WTC11 (cell line): ENCODE measurements at regions of chr22 and their contacts with region 1.

Region 1: DNA sequence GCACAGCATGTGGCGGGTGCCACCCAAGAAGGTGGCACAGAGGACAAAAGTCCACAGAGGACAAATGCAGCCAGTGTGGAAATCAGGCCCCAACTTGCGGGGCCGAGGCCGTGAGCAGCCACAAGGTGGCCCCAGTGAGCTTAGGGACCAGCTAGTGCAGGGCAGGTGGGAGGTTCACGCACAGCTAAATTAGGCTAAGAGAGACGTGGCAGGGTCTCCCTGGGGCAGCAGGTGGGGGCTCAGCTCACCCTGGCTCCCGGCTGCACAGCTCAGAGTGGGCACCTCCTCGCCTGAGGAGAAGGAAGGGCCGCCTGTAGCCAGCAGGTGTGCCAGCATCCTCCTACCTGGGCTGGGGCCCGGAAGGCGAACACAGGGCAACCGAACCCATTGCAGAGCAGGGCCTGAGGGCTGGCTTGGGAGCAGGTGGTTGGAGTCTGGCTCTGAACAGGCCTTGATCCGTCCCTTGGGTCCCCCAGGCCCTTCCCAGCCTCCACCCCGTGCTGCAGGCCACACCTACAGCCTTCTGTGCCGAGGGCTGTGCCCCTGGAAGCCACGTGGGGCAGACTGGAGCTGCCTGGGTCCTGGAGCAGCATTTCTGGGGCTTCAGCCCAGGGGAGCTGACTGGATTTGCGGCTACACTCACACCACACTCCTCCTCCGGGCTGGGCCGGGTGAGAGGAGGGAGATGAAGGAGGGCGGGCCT is 26.1 kb upstream of the CELSR1 start:
- DNase-seq: peak; percentile 82
- ATAC-seq: peak; percentile 92
- H3K4me3 Mint-ChIP-seq: peak overlapping the region; percentile 18
- H3K27ac Mint-ChIP-seq: peak overlapping the region; percentile 79
- H3K4me1 Mint-ChIP-seq: peaks cover 6% of the 10 kb centered on the region; the same call in 1 of the 2 replicates
- H3K27me3 Mint-ChIP-seq: no peaks in the 10 kb centered on the region; the same call in 1 of the 2 replicates
- CTCF ChIP-seq: peak; percentile 61

Region 2: GRCh38 chr22:46462726-46463371 is 100.7 kb before region 1 on chr22:
- CTCF ChIA-PET with region 1: no interaction called
- POLR2A ChIA-PET with region 1: no interaction called
- DNase-seq: no peak
- ATAC-seq: no peak
- H3K4me3 Mint-ChIP-seq: no peak overlapping the region
- H3K27ac Mint-ChIP-seq: peak overlapping the region; percentile 53; the same call in 1 of the 2 replicates
- H3K4me1 Mint-ChIP-seq: no peaks in the 10 kb centered on the region
- H3K27me3 Mint-ChIP-seq: no peaks in the 10 kb centered on the region
- CTCF ChIP-seq: no peak

Region 3: GRCh38 chr22:46547883-46548244 is 15.7 kb before region 1 on chr22:
- CTCF ChIA-PET with region 1: interaction called, 27 read pairs
- POLR2A ChIA-PET with region 1: interaction called, 4 read pairs
- DNase-seq: no peak
- ATAC-seq: no peak
- H3K4me3 Mint-ChIP-seq: no peak overlapping the region
- H3K27ac Mint-ChIP-seq: no peak overlapping the region
- H3K4me1 Mint-ChIP-seq: no peaks in the 10 kb centered on the region
- H3K27me3 Mint-ChIP-seq: peaks cover 6% of the 10 kb centered on the region
- CTCF ChIP-seq: no peak

Region 4: DNA sequence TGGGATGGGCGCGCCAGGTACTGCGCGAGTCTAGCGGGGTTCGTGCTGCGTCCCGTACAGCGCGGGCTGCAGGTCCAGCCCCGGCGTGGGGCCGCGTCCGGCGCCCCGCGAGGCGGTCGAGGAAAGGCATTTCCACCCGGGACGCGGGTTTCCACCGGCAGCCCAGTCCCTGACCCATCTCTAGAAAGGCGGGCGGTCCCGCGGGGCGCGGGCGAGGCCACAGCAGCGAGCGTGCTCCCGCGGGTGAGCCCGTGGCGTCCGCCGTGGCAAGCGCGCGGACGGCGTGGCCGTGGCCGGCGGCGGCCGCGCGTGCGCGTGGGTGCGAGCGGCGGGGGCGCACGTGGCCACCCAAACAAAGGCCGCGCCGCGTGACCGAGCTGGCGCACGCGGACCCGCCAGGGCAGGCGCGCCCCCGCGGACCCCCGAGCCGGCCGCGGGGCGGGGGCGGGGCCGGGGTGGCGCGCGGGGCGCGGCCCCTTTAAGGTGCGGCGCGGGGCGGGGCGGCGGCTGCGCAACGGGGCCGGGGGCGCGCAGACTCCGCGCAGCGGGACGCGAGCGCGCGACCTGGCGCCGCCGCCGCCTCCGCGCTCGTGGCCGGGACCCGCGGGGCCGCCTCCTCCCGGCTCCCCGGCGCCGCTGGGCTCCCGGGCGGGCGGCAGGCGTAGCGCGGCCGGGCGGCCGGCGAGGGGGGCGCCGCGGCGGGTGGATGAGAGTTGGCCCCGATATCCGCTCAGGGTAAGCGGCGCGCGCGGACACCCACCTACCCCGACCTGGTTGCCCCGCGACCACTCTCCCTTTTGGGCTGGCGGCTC is 13.2 kb after region 1 on chr22:
- CTCF ChIA-PET with region 1: interaction called, 27 read pairs
- POLR2A ChIA-PET with region 1: no interaction called
- DNase-seq: peak; percentile 43
- ATAC-seq: peak; percentile 24
- H3K4me3 Mint-ChIP-seq: peak overlapping the region; percentile 76
- H3K27ac Mint-ChIP-seq: no peak overlapping the region
- H3K4me1 Mint-ChIP-seq: peaks cover 53% of the 10 kb centered on the region
- H3K27me3 Mint-ChIP-seq: peaks cover 3% of the 10 kb centered on the region; the same call in 1 of the 2 replicates
- CTCF ChIP-seq: no peak

Region 5: GRCh38 chr22:46626911-46627805 is 63.6 kb after region 1 on chr22:
- CTCF ChIA-PET with region 1: interaction called, 28 read pairs
- POLR2A ChIA-PET with region 1: no interaction called
- DNase-seq: peak; percentile 92
- ATAC-seq: peak; percentile 97
- H3K4me3 Mint-ChIP-seq: no peak overlapping the region
- H3K27ac Mint-ChIP-seq: peak overlapping the region; percentile 96
- H3K4me1 Mint-ChIP-seq: peaks cover 20% of the 10 kb centered on the region
- H3K27me3 Mint-ChIP-seq: no peaks in the 10 kb centered on the region
- CTCF ChIP-seq: no peak

Region 6: DNA sequence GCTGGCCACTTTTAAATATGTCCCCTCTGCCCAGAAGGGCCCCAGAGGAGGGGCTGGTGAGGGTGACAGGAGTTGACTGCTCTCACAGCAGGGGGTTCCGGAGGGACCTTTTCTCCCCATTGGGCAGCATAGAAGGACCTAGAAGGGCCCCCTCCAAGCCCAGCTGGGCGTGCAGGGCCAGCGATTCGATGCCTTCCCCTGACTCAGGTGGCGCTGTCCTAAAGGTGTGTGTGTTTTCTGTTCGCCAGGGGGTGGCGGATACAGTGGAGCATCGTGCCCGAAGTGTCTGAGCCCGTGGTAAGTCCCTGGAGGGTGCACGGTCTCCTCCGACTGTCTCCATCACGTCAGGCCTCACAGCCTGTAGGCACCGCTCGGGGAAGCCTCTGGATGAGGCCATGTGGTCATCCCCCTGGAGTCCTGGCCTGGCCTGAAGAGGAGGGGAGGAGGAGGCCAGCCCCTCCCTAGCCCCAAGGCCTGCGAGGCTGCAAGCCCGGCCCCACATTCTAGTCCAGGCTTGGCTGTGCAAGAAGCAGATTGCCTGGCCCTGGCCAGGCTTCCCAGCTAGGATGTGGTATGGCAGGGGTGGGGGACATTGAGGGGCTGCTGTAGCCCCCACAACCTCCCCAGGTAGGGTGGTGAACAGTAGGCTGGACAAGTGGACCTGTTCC is 103.2 kb after region 1 on chr22:
- CTCF ChIA-PET with region 1: interaction called, 24 read pairs
- POLR2A ChIA-PET with region 1: no interaction called
- DNase-seq: no peak
- ATAC-seq: no peak
- H3K4me3 Mint-ChIP-seq: no peak overlapping the region
- H3K27ac Mint-ChIP-seq: no peak overlapping the region
- H3K4me1 Mint-ChIP-seq: no peaks in the 10 kb centered on the region
- H3K27me3 Mint-ChIP-seq: no peaks in the 10 kb centered on the region
- CTCF ChIP-seq: no peak

Region 7: GRCh38 chr22:46681010-46681409 is 117.5 kb after region 1 on chr22:
- CTCF ChIA-PET with region 1: interaction called, 49 read pairs
- POLR2A ChIA-PET with region 1: no interaction called
- DNase-seq: peak; percentile 52
- ATAC-seq: peak; percentile 81
- H3K4me3 Mint-ChIP-seq: no peak overlapping the region
- H3K27ac Mint-ChIP-seq: no peak overlapping the region
- H3K4me1 Mint-ChIP-seq: 0 out of 2 replicates have a peak, but pooled peaks cover 4% of the 10 kb centered on the region
- H3K27me3 Mint-ChIP-seq: no peaks in the 10 kb centered on the region
- CTCF ChIP-seq: peak; percentile 35; the same call in 1 of the 2 replicates

Region 8: GRCh38 chr22:46798366-46799350 is 235.1 kb after region 1 on chr22:
- CTCF ChIA-PET with region 1: interaction called, 22 read pairs
- POLR2A ChIA-PET with region 1: no interaction called
- DNase-seq: peak; percentile 87
- ATAC-seq: peak; percentile 81
- H3K4me3 Mint-ChIP-seq: no peak overlapping the region
- H3K27ac Mint-ChIP-seq: no peak overlapping the region
- H3K4me1 Mint-ChIP-seq: peaks cover 3% of the 10 kb centered on the region
- H3K27me3 Mint-ChIP-seq: no peaks in the 10 kb centered on the region
- CTCF ChIP-seq: peak; percentile 93

Region 9: DNA sequence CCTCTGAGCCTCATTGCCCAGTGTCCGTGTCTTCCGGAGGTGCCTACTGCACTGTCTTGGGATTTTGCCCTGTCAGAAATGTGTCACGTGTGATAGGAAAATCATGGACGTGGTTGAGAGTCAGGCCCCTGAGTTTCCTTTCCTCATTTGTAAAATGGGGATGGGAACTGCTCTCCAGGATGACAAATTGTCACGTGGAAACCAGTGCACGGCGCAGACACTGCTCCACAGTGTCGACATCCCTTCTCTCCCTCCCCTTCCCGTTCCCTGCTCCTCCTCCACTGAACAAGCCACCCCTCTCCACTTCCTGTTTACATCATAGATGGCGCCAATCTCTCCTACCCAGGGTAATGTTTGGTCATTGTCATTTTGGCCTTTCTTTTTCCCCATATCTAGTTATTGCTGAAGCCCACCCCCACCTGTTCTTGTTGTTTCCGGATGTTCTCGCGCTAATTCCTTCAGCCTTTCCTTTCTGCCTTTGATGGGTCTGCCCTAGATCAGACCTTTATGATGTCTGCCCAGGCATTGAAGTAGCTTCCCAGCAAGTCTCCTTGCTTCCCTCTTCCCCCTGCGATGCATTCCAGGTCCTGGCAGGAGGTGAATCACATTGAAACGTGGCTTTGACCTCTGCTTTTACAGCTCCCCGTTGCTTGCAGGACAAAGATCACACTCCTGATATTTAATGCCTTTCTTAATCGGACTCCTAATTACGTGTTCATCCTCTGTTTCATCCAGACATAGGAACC is 290.8 kb after region 1 on chr22:
- CTCF ChIA-PET with region 1: no interaction called
- POLR2A ChIA-PET with region 1: no interaction called
- DNase-seq: no peak
- ATAC-seq: peak; percentile 65
- H3K4me3 Mint-ChIP-seq: no peak overlapping the region
- H3K27ac Mint-ChIP-seq: peak overlapping the region; percentile 81
- H3K4me1 Mint-ChIP-seq: peaks cover 21% of the 10 kb centered on the region
- H3K27me3 Mint-ChIP-seq: no peaks in the 10 kb centered on the region; the same call in 1 of the 2 replicates
- CTCF ChIP-seq: no peak